ENCODE measurements at regions of chr16 and their contacts with region 1.

Region 1: GRCh38 chr16:21277927-21278706 is at the start of gene CRYM:
- H3K4me3 ChIP-seq: peak within 1 kb of the TSS; percentile 47
- H3K27ac ChIP-seq: no peak within 1 kb of the TSS
- H3K4me1 ChIP-seq: no peaks in the 10 kb centered on the region
- CTCF ChIP-seq: peak; percentile 93

Region 2: DNA sequence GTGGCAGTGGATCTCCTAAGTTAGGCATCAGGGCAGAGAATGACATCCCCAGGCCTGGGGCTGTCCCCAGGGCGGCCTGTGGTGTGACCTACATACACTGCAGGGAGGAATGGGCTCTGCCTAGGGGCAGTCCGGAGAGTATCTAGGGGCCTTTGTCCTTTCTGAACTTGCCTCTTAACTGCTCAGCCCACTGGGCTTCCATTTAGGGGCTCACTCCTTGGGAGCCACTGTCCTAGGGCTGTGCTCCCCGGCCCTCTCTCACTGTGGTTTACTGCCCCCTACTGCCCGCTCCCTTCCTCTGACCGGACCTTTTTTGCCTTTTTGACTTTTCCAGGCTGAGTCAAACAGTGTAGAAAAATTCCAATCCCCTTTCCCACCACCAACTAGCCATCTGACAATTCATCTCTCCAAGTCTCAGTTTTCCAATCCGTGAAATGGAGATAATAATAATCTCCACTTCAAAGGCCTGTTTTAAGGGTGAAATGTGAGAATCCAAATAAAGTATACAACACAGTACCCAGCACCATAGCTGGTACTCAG is 194.3 kb before region 1 on chr16:
- CTCF ChIA-PET with region 1: no interaction called
- POLR2A ChIA-PET with region 1: no interaction called
- H3K4me3 ChIP-seq: no peak overlapping the region
- H3K27ac ChIP-seq: no peak overlapping the region
- H3K4me1 ChIP-seq: no peaks in the 10 kb centered on the region
- CTCF ChIP-seq: no peak

Region 3: GRCh38 chr16:21190599-21190998 is 87.5 kb before region 1 on chr16:
- CTCF ChIA-PET with region 1: interaction called, 41 read pairs
- POLR2A ChIA-PET with region 1: no interaction called
- H3K4me3 ChIP-seq: no peak overlapping the region
- H3K27ac ChIP-seq: no peak overlapping the region
- H3K4me1 ChIP-seq: no peaks in the 10 kb centered on the region
- CTCF ChIP-seq: no peak

Measured in HEK293 (cell line).